K562 (cell line): ENCODE measurements at regions of chr6 and their contacts with region 1.

Region 1: GRCh38 chr6:27617700-27618689 is 145.1 kb upstream of the ZNF184 start:
- DNase-seq: peak; percentile 62 to 81 (median 73)
- ATAC-seq: peak; percentile 90
- H3K4me3 ChIP-seq: peak overlapping the region; percentile 53
- H3K27ac ChIP-seq: peak overlapping the region; percentile 33
- H3K4me1 ChIP-seq: peaks cover 5 to 20% of the 10 kb centered on the region in 2 experiments; a peak in 4 of 5 replicates
- H3K27me3 ChIP-seq: no peaks in the 10 kb centered on the region
- CTCF ChIP-seq: peak; percentile 15 to 53 (median 39); a peak in 3 of 6 replicates
- EP300 ChIP-seq: peak; percentile 68
- POLR2A ChIP-seq: no peak
- RAD21 ChIP-seq: peak; percentile 19 to 55

Region 2: GRCh38 chr6:27565821-27566766 is 51.9 kb before region 1 on chr6:
- CTCF ChIA-PET with region 1: no interaction called
- POLR2A ChIA-PET with region 1: no interaction called
- in situ Hi-C with region 1: no loop called
- intact Hi-C with region 1: no loop called
- DNase-seq: no peak
- ATAC-seq: 0 out of 3 replicates have a peak, but pooled peaks have one; percentile 36
- H3K4me3 ChIP-seq: no peak overlapping the region
- H3K27ac ChIP-seq: no peak overlapping the region
- H3K4me1 ChIP-seq: peaks cover 12% of the 10 kb centered on the region in 2 experiments; a peak in 4 of 5 replicates
- H3K27me3 ChIP-seq: no peaks in the 10 kb centered on the region
- CTCF ChIP-seq: peak in 1 of 3 experiments; percentile 16; a peak in 1 of 6 replicates
- EP300 ChIP-seq: no peak
- POLR2A ChIP-seq: no peak
- RAD21 ChIP-seq: no peak

Region 3: GRCh38 chr6:27601668-27602254 is 16.2 kb before region 1 on chr6:
- CTCF ChIA-PET with region 1: no interaction called
- POLR2A ChIA-PET with region 1: interaction called, 16 read pairs
- in situ Hi-C with region 1: no loop called
- intact Hi-C with region 1: no loop called
- DNase-seq: peak; percentile 56 to 84 (median 68)
- ATAC-seq: peak; percentile 80
- H3K4me3 ChIP-seq: peak overlapping the region; percentile 57
- H3K27ac ChIP-seq: peak overlapping the region; percentile 82
- H3K4me1 ChIP-seq: peaks cover 8 to 13% of the 10 kb centered on the region in 2 experiments; a peak in 3 of 5 replicates
- H3K27me3 ChIP-seq: no peaks in the 10 kb centered on the region
- CTCF ChIP-seq: no peak
- EP300 ChIP-seq: no peak
- POLR2A ChIP-seq: peak; percentile 58; the same call in 1 of the 2 replicates
- RAD21 ChIP-seq: no peak

Region 4: GRCh38 chr6:27630727-27631608 is 13.0 kb after region 1 on chr6:
- CTCF ChIA-PET with region 1: no interaction called
- POLR2A ChIA-PET with region 1: interaction called, 17 read pairs
- in situ Hi-C with region 1: no loop called
- intact Hi-C with region 1: no loop called
- DNase-seq: peak; percentile 79 to 94 (median 83)
- ATAC-seq: peak; percentile 99
- H3K4me3 ChIP-seq: peak overlapping the region; percentile 57
- H3K27ac ChIP-seq: peak overlapping the region; percentile 71
- H3K4me1 ChIP-seq: peaks cover 8 to 10% of the 10 kb centered on the region in 2 experiments; a peak in 4 of 5 replicates
- H3K27me3 ChIP-seq: no peaks in the 10 kb centered on the region
- CTCF ChIP-seq: peak; percentile 55 to 64 (median 63); a peak in 5 of 6 replicates
- EP300 ChIP-seq: peak; percentile 76
- POLR2A ChIP-seq: no peak
- RAD21 ChIP-seq: 0 out of 4 replicates have a peak, but pooled peaks have one; percentile 2 to 14

Region 5: DNA sequence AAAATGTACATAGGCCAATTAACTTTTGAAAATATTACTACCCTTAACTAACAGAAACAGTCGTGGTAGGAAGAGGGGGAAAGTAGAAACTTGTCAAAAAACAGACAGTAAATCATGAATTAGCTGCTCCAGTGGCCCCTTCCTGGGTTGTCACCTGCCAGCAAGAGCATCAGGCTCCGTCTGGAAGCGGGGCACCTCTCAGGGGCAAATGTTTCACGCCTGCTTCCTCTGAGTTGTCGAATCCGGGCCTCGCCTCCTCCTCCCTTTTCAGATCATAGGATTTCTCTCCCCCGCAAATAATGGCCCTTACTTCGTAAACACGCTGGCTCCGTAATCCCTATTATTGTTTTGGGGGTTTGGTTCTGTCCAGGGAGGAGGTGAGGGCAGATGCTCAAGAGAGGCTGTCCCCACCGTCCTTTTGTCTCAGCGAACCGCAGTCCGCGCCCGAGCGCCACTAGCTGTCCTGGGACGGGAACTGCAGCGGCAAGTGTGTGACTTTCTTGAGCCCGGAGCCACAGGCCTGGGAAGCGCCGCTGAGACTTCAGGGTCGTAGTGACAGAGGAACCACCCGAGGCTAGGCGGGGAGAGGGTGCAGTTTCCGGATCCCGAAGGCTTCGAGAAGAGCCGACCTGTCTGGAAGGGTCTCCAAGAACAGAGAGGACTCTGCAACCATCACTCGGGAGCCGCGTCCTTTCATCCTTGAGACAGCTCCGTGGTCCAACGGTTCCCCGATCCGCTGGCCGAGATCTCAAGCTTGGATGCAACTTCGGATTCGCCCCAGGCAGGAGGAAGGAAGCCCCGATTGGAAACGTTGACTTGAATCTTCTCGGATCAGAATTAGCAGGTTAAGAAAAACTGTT is 69.4 kb after region 1 on chr6:
- CTCF ChIA-PET with region 1: interaction called, 4 read pairs
- POLR2A ChIA-PET with region 1: no interaction called
- in situ Hi-C with region 1: no loop called
- intact Hi-C with region 1: loop called (anchors 2 kb)
- DNase-seq: peak; percentile 78 to 97 (median 82)
- ATAC-seq: peak; percentile 89
- H3K4me3 ChIP-seq: peak overlapping the region; percentile 63
- H3K27ac ChIP-seq: peak overlapping the region; percentile 78
- H3K4me1 ChIP-seq: peaks cover 5 to 24% of the 10 kb centered on the region in 2 experiments; a peak in 4 of 5 replicates
- H3K27me3 ChIP-seq: no peaks in the 10 kb centered on the region
- CTCF ChIP-seq: peak; percentile 92 to 96 (median 95)
- EP300 ChIP-seq: 0 out of 2 replicates have a peak, but pooled peaks have one; percentile 14
- POLR2A ChIP-seq: no peak
- RAD21 ChIP-seq: peak; percentile 71 to 87

Region 6: DNA sequence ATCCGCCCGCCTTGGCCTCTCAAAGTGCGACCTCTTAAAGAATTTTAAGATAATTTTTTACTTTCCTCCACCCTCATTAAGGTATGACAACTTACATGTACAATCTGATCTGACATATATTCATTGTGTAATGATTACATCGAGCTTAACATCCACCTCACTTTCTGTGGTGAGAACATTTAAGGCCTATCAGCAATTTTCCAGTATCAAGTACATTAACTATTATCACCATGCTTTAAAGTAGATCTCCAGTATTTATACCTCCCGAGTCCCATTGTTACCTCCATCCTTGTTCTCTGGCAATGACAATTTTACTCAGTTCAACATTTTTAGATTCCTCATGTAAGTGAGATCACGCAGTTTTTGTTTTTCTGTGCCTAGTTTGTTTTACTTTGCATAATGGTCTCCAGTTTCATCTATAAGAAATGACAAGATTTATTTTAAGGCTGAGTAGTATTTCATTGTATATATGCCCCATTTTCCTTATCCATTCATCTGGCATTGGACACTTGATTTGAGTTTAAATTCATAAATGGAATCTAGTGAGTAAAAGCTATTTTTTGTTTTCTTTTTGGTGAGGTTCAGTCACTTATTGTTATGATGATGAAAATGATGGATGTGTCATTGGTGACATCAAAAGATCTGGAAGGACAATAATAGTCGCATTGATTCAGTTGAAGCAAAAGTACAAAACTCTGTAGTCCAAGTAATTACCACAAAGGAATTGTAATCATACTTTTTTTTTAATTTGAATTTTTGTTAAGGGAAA is 207.2 kb after region 1 on chr6:
- CTCF ChIA-PET with region 1: no interaction called
- POLR2A ChIA-PET with region 1: no interaction called
- in situ Hi-C with region 1: no loop called
- intact Hi-C with region 1: no loop called
- DNase-seq: peak in 1 of 4 experiments; percentile 12
- ATAC-seq: no peak
- H3K4me3 ChIP-seq: peak overlapping the region; percentile 50
- H3K27ac ChIP-seq: peak overlapping the region; percentile 83
- H3K4me1 ChIP-seq: peaks cover 0 to 8% of the 10 kb centered on the region in 2 experiments; a peak in 3 of 5 replicates
- H3K27me3 ChIP-seq: no peaks in the 10 kb centered on the region
- CTCF ChIP-seq: no peak
- EP300 ChIP-seq: no peak
- POLR2A ChIP-seq: peak; percentile 38
- RAD21 ChIP-seq: no peak